ENCODE measurements at regions of chr14 and their contacts with region 1.

Region 1: GRCh38 chr14:103788086-103788485 is 59.3 kb downstream of the PPP1R13B start:
- DNase-seq: no peak
- ATAC-seq: no peak
- H3K4me3 ChIP-seq: no peak overlapping the region
- H3K27ac ChIP-seq: no peak overlapping the region
- H3K4me1 ChIP-seq: no peaks in the 10 kb centered on the region
- H3K27me3 ChIP-seq: no peaks in the 10 kb centered on the region
- CTCF ChIP-seq: no peak
- EP300 ChIP-seq: no peak
- POLR2A ChIP-seq: no peak
- RAD21 ChIP-seq: no peak

Region 2: DNA sequence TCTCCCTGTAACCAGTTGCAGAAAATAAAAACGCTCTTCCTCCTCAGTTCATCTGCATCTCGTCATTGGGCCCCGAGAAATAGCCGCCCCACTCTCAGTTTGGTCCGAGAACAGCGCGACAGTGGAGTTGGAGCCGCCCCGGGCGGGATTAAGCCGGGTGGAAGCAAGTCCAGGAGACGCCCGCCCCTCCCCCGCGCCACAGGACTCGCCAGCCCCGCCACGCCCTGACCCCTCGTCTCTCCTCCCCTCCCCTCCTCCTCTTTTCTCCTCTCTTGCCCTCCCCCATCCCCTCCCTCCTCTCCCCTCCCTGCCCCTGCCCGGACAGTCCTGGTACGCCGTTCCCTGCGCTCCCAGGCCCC is 581.1 kb before region 1 on chr14:
- CTCF ChIA-PET with region 1: no interaction called
- POLR2A ChIA-PET with region 1: no interaction called
- RAD21 ChIA-PET with region 1: no interaction called
- SMC1A ChIA-PET with region 1: no interaction called
- in situ Hi-C with region 1: no loop called
- intact Hi-C with region 1: no loop called
- DNase-seq: no peak
- ATAC-seq: no peak
- H3K4me3 ChIP-seq: no peak overlapping the region
- H3K27ac ChIP-seq: no peak overlapping the region
- H3K4me1 ChIP-seq: no peaks in the 10 kb centered on the region
- H3K27me3 ChIP-seq: no peaks in the 10 kb centered on the region
- CTCF ChIP-seq: no peak
- EP300 ChIP-seq: no peak
- POLR2A ChIP-seq: no peak
- RAD21 ChIP-seq: no peak

Region 3: DNA sequence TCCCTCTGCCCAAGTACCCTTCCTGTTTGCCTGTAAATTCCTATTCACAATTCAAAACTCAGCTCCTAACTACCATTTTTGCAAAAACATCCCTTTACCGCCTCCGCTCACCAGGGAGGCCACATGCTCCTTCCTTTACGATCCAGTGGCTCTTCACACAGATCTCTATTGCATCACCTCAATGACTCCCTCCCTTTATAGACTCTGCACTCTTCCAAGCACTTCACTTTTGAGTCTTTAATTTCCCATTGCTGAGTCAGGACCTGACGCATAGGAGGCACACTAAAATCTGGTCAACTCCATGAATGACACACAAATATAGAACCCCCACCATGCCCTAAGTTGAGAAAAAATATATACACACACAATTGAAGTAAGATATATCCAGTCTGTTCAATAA is 13.4 kb after region 1 on chr14:
- CTCF ChIA-PET with region 1: interaction called, 12 read pairs
- POLR2A ChIA-PET with region 1: no interaction called
- RAD21 ChIA-PET with region 1: no interaction called
- SMC1A ChIA-PET with region 1: interaction called, 3 read pairs
- in situ Hi-C with region 1: no loop called
- intact Hi-C with region 1: no loop called
- DNase-seq: no peak
- ATAC-seq: no peak
- H3K4me3 ChIP-seq: no peak overlapping the region
- H3K27ac ChIP-seq: no peak overlapping the region
- H3K4me1 ChIP-seq: peaks cover 18% of the 10 kb centered on the region
- H3K27me3 ChIP-seq: no peaks in the 10 kb centered on the region
- CTCF ChIP-seq: no peak
- EP300 ChIP-seq: no peak
- POLR2A ChIP-seq: no peak
- RAD21 ChIP-seq: no peak

Measured in GM12878 (cell line).